HEK293T (cell line): ENCODE measurements at regions of chr12 and their contacts with region 1.

Region 1: GRCh38 chr12:62210422-62210821 is 49.8 kb upstream of the USP15 start:
- DNase-seq: peak; percentile 41

Region 2: GRCh38 chr12:62192180-62192902 is 18.1 kb before region 1 on chr12:
- CTCF ChIA-PET with region 1: interaction called, 15 read pairs
- POLR2A ChIA-PET with region 1: no interaction called
- DNase-seq: peak; percentile 70